Endothelial cell of umbilical vein (primary cell): ENCODE measurements at regions of chr5 and their contacts with region 1.

Region 1: GRCh38 chr5:36690041-36690961 is 83.9 kb downstream of the SLC1A3 start:
- DNase-seq: peak; percentile 48
- H3K4me3 ChIP-seq: peak overlapping the region; percentile 16 to 36 (median 28)
- H3K27ac ChIP-seq: no peak overlapping the region
- H3K4me1 ChIP-seq: no peaks in the 10 kb centered on the region
- H3K27me3 ChIP-seq: peaks cover 2 to 3% of the 10 kb centered on the region in 2 experiments
- CTCF ChIP-seq: peak; percentile 82 to 92
- POLR2A ChIP-seq: no peak

Region 2: DNA sequence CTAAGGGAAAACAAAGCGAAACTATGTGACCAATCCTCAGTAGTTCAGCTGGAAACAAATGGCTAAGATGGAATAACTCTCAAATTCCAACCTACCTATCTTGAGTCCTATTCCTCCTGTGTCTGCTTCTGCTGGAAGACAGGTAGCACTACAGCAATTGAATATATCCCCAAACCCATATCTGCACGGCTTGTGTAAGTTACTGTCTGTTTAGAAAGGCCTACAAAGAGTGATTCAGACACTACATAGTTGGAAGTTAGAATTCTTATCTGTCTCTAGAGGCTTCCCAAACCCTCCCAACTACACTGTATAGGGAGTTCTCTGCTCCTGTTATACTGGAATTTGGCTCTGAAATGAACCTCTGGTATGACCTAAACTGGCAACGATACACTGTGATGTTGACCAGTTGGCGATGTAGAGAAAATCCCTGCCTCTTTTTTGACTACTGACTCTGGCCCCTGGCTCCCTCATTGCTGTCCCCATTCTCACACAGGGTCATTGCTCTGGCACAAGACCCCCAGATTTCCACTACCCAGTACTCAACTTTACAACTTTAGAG is 426.0 kb before region 1 on chr5:
- CTCF ChIA-PET with region 1: interaction called, 113 read pairs
- POLR2A ChIA-PET with region 1: no interaction called
- dilution Hi-C with region 1: no loop called
- intact Hi-C with region 1: loop called (anchors 1 kb)
- DNase-seq: no peak
- H3K4me3 ChIP-seq: no peak overlapping the region
- H3K27ac ChIP-seq: no peak overlapping the region
- H3K4me1 ChIP-seq: no peaks in the 10 kb centered on the region
- H3K27me3 ChIP-seq: peaks cover 2 to 5% of the 10 kb centered on the region in 2 experiments
- CTCF ChIP-seq: no peak
- POLR2A ChIP-seq: no peak

Region 3: GRCh38 chr5:36305571-36306326 is 384.6 kb before region 1 on chr5:
- CTCF ChIA-PET with region 1: interaction called, 3 read pairs
- POLR2A ChIA-PET with region 1: no interaction called
- dilution Hi-C with region 1: no loop called
- intact Hi-C with region 1: loop called (anchors 1 kb)
- DNase-seq: peak; percentile 61
- H3K4me3 ChIP-seq: no peak overlapping the region
- H3K27ac ChIP-seq: no peak overlapping the region
- H3K4me1 ChIP-seq: no peaks in the 10 kb centered on the region
- H3K27me3 ChIP-seq: peaks cover 6 to 9% of the 10 kb centered on the region in 2 experiments
- CTCF ChIP-seq: peak; percentile 58 to 59
- POLR2A ChIP-seq: no peak

Region 4: GRCh38 chr5:36323926-36324781 is 366.1 kb before region 1 on chr5:
- CTCF ChIA-PET with region 1: no interaction called
- POLR2A ChIA-PET with region 1: no interaction called
- dilution Hi-C with region 1: no loop called
- intact Hi-C with region 1: no loop called
- DNase-seq: no peak
- H3K4me3 ChIP-seq: no peak overlapping the region
- H3K27ac ChIP-seq: no peak overlapping the region
- H3K4me1 ChIP-seq: no peaks in the 10 kb centered on the region
- H3K27me3 ChIP-seq: no peaks in the 10 kb centered on the region
- CTCF ChIP-seq: no peak
- POLR2A ChIP-seq: no peak

Region 5: GRCh38 chr5:36414869-36415282 is 275.4 kb before region 1 on chr5:
- CTCF ChIA-PET with region 1: interaction called, 277 read pairs
- POLR2A ChIA-PET with region 1: no interaction called
- dilution Hi-C with region 1: no loop called
- intact Hi-C with region 1: loop called (anchors 1 kb)
- DNase-seq: peak; percentile 42
- H3K4me3 ChIP-seq: no peak overlapping the region
- H3K27ac ChIP-seq: no peak overlapping the region
- H3K4me1 ChIP-seq: no peaks in the 10 kb centered on the region
- H3K27me3 ChIP-seq: no peaks in the 10 kb centered on the region
- CTCF ChIP-seq: peak; percentile 9 to 21
- POLR2A ChIP-seq: no peak

Region 6: DNA sequence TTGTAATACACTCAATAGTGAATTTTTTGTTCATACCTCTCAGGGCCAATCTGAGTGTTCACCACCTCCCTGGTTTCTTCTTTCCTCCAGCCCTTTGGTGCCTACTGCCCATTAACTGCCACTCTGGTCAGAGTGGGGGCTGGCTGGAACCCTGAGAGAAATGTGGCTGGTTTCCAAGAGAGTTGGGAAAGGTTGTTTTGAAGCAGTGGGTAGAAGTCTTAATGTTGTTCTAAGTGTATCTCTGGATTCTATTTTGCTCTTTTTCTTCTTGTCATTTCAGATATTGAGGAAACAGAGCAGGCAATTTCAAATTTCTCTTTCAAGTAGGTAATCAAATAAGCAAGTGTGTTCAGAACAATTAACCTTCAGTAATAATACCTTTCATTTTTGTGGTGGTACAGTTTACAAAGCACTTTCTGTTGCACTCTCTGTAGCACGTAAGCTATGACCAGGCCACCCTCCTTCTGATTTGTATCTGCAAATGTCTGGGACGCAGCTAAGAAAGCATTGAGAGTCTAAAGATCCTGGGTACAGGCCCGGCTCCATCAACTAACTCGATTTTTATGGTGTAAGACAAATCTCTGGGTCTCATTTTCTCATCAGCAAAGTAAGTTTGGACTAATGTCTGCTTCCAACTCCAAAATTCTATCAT is 75.5 kb before region 1 on chr5:
- CTCF ChIA-PET with region 1: interaction called, 4 read pairs
- POLR2A ChIA-PET with region 1: no interaction called
- dilution Hi-C with region 1: no loop called
- intact Hi-C with region 1: loop called (anchors 1 kb)
- DNase-seq: no peak
- H3K4me3 ChIP-seq: no peak overlapping the region
- H3K27ac ChIP-seq: no peak overlapping the region
- H3K4me1 ChIP-seq: no peaks in the 10 kb centered on the region
- H3K27me3 ChIP-seq: peaks cover 2 to 3% of the 10 kb centered on the region in 2 experiments
- CTCF ChIP-seq: no peak
- POLR2A ChIP-seq: no peak

Region 7: DNA sequence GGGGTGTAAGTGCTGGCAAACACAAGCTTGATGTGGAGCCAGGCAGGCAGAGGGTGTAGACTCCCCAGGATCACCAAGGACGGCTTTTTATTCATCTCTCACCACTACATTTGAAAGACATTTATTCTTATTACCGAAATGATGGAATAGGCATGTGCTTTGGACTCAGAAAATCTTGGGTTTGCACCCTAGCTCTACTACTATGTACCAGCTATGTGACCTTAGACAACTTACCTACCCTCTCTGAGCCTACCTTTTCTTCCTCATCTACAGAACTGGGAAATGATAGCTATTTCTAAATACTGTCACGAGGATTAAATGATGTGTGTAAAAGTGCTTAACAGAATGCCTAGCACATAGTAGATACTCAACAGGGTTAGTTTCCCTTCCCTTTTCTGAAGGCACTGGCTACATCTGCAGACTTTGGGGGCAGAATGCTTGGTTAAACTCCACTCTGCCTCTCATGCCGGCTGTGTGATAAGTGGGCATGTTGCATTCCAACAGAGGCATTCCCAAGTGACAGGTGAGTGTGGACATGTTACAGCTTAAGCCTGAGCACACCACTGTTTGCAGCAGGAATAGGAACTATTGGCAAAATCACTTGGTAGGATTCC is 10.9 kb after region 1 on chr5:
- CTCF ChIA-PET with region 1: interaction called, 16 read pairs
- POLR2A ChIA-PET with region 1: no interaction called
- dilution Hi-C with region 1: no loop called
- intact Hi-C with region 1: no loop called
- DNase-seq: no peak
- H3K4me3 ChIP-seq: no peak overlapping the region
- H3K27ac ChIP-seq: no peak overlapping the region
- H3K4me1 ChIP-seq: no peaks in the 10 kb centered on the region
- H3K27me3 ChIP-seq: peaks cover 20 to 21% of the 10 kb centered on the region in 2 experiments
- CTCF ChIP-seq: no peak
- POLR2A ChIP-seq: no peak